PC-3 (cell line): ENCODE measurements at regions of chr4 and their contacts with region 1.

Region 1: GRCh38 chr4:167989815-167990214 is 102.5 kb upstream of the ANXA10 start:
- DNase-seq: peak; percentile 48
- ATAC-seq: peak; percentile 68
- H3K4me3 ChIP-seq: no peak overlapping the region
- H3K27ac ChIP-seq: no peak overlapping the region
- H3K4me1 ChIP-seq: no peaks in the 10 kb centered on the region
- H3K27me3 ChIP-seq: no peaks in the 10 kb centered on the region
- CTCF ChIP-seq: peak; percentile 54

Region 2: GRCh38 chr4:168028568-168028967 is 38.8 kb after region 1 on chr4:
- CTCF ChIA-PET with region 1: no interaction called
- POLR2A ChIA-PET with region 1: no interaction called
- intact Hi-C with region 1: loop called (anchors 1 kb)
- DNase-seq: peak; percentile 63
- ATAC-seq: peak; percentile 57
- H3K4me3 ChIP-seq: peak overlapping the region; percentile 11; the same call in 1 of the 2 replicates
- H3K27ac ChIP-seq: peak overlapping the region; percentile 45
- H3K4me1 ChIP-seq: peaks cover 9% of the 10 kb centered on the region
- H3K27me3 ChIP-seq: no peaks in the 10 kb centered on the region
- CTCF ChIP-seq: peak; percentile 63